ENCODE measurements at regions of chr1 and their contacts with region 1.

Region 1: DNA sequence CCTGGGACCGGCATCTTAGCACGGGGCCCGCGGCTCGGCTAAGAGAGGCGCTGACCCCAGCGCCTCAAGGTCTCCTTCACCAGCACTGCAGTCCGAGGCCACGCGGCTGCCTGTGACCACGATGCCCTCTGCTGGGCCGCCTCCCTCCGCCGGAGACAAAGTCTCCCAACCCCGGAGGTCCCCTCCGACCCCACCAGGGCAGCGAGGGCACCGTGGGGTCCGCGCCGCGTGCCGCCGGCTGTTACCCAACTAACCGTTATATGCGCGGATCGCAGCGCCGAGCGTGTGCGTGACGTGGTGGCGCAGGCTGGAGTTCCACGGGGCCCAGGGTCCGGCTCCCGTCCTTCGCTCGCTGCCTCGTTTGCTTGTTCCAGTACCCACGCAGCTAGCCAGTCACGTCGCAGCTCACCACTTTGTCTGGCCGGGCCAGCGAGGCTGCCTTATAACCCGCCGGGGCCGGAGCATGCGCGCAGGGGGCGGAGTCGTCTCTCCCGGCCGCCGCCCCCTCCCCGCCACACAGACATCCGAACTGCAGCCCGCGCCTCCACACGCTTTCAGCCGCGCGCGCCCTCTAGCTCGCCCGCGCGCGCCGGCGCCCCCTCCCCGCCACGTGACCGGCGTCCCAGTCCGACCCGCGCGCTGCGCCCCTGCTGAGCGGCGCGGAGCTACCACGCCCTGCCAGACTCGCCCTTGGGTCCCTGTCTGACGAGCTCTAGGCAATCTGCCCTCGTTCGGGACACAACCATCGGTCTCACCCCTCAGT is at the start of gene SLC16A1:
- DNase-seq: peak; percentile 97
- H3K4me3 ChIP-seq: peak within 1 kb of the TSS; percentile 74 to 82 (median 78)
- H3K27ac ChIP-seq: peak within 1 kb of the TSS; percentile 85 to 94 (median 93)
- H3K4me1 ChIP-seq: peaks cover 21 to 62% (median 60%) of the 10 kb centered on the region in 4 donors
- H3K27me3 ChIP-seq: no peaks in the 10 kb centered on the region
- CTCF ChIP-seq: peak; percentile 14 to 42 (median 31)
- EP300 ChIP-seq: no peak
- POLR2A ChIP-seq: peak; percentile 48
- total RNA-seq, gene SLC16A1: 29.9 to 40.1 (median 33.7) TPM

Region 2: GRCh38 chr1:112882271-112882744 is 73.7 kb before region 1 on chr1:
- intact Hi-C with region 1: loop called (anchors 5 kb)
- DNase-seq: no peak
- H3K4me3 ChIP-seq: no peak overlapping the region
- H3K27ac ChIP-seq: peak overlapping the region in 1 of 4 donors; percentile 7
- H3K4me1 ChIP-seq: peaks cover 3 to 10% (median 8%) of the 10 kb centered on the region in 4 donors
- H3K27me3 ChIP-seq: no peaks in the 10 kb centered on the region
- CTCF ChIP-seq: no peak
- EP300 ChIP-seq: no peak
- POLR2A ChIP-seq: no peak

Region 3: GRCh38 chr1:112995890-112996289 is 39.9 kb after region 1 on chr1:
- intact Hi-C with region 1: loop called (anchors 2 kb)
- DNase-seq: no peak
- H3K4me3 ChIP-seq: no peak overlapping the region
- H3K27ac ChIP-seq: peak overlapping the region; percentile 77 to 81 (median 79)
- H3K4me1 ChIP-seq: peaks cover 24 to 70% (median 57%) of the 10 kb centered on the region in 4 donors
- H3K27me3 ChIP-seq: no peaks in the 10 kb centered on the region
- CTCF ChIP-seq: no peak
- EP300 ChIP-seq: no peak
- POLR2A ChIP-seq: no peak

Region 4: GRCh38 chr1:113007706-113008364 is 51.9 kb after region 1 on chr1:
- intact Hi-C with region 1: no loop called
- DNase-seq: no peak
- H3K4me3 ChIP-seq: no peak overlapping the region
- H3K27ac ChIP-seq: no peak overlapping the region
- H3K4me1 ChIP-seq: peaks cover 0 to 9% (median 3%) of the 10 kb centered on the region in 4 donors
- H3K27me3 ChIP-seq: no peaks in the 10 kb centered on the region
- CTCF ChIP-seq: no peak
- EP300 ChIP-seq: no peak
- POLR2A ChIP-seq: no peak

Measured in esophagus muscularis mucosa (tissue), 4 donors.